ENCODE measurements at regions of chr21 and their contacts with region 1.

Region 1: GRCh38 chr21:46285761-46286496 is at the start of gene YBEY:
- DNase-seq: peak; percentile 93
- H3K4me3 Mint-ChIP-seq: peak within 1 kb of the TSS; percentile 98
- H3K27ac Mint-ChIP-seq: peak within 1 kb of the TSS; percentile 96
- H3K4me1 Mint-ChIP-seq: peaks cover 55% of the 10 kb centered on the region
- H3K27me3 Mint-ChIP-seq: no peaks in the 10 kb centered on the region
- total RNA-seq, gene YBEY: 14.4 to 14.8 TPM

Region 2: DNA sequence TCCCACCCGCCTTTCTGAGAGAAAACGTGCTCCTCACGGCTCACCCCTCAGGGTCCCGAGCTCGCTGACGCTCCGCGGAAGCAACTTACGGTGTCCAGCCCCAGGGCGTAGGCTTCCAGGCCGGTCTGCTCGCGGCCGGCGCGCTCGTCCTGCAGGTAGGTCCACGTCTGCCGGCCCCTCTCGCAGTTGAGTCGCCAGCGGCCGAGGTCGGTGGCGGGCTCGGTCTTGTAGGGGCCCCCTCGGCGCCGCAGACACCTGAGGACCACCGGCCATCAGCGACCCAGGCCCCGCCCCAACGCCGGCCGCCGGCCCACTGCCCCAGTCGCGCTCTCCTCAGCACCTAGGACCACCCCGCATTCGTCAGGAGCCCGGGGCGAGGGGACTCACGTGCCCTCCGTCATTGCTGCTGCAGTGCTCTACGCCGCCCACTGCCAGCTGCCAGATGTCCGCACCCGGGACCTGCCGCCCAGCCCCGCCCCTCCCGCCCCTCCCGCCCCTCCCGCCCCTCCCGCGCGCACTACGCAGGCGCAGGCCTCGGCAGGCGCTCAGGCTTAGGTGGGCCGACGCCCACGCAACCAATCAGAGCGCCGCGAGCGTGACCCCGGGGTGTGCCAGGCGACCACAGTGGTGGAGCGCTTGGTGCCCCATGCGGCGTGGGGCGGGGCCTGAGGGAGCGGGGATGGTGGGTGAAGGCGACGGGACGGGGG is 57.4 kb before region 1 on chr21 and contains the start of gene LSS:
- CTCF ChIA-PET with region 1: no interaction called
- POLR2A ChIA-PET with region 1: interaction called, 3 read pairs
- intact Hi-C with region 1: loop called (anchors 1 kb)
- DNase-seq: peak; percentile 97
- H3K4me3 Mint-ChIP-seq: peak within 1 kb of the TSS; percentile 85
- H3K27ac Mint-ChIP-seq: peak within 1 kb of the TSS; percentile 70
- H3K4me1 Mint-ChIP-seq: peaks cover 35% of the 10 kb centered on the region
- H3K27me3 Mint-ChIP-seq: no peaks in the 10 kb centered on the region
- total RNA-seq, gene LSS: 22.7 to 22.8 TPM

Region 3: DNA sequence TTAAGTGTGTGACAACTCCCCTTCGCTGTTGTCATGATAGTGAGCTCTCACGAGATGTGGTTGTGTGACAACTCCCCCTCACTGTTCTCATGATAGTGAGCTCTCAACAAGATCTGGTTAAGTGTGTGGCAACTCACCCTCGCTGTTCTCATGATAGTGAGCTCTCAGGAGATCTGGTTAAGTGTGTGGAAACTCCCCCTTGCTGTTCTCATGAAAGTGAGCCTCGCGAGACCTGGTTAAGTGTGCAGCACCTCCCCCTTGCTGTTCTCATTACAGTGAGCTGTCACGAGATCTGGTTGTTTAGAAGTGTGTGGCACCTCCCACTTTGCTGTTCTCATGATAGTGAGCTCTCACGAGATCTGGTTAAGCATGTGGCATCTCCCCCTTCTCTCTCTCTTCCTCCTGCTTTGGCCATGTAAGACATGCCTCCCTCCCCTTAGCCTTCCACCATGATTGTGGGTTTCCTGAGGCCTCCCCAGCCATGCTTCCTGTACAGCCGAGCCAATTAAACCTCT is 32.3 kb before region 1 on chr21:
- CTCF ChIA-PET with region 1: no interaction called
- POLR2A ChIA-PET with region 1: no interaction called
- intact Hi-C with region 1: loop called (anchors 5 kb)
- DNase-seq: peak; percentile 75
- H3K4me3 Mint-ChIP-seq: no peak overlapping the region
- H3K27ac Mint-ChIP-seq: peak overlapping the region; percentile 79
- H3K4me1 Mint-ChIP-seq: peaks cover 31% of the 10 kb centered on the region
- H3K27me3 Mint-ChIP-seq: no peaks in the 10 kb centered on the region

Region 4: DNA sequence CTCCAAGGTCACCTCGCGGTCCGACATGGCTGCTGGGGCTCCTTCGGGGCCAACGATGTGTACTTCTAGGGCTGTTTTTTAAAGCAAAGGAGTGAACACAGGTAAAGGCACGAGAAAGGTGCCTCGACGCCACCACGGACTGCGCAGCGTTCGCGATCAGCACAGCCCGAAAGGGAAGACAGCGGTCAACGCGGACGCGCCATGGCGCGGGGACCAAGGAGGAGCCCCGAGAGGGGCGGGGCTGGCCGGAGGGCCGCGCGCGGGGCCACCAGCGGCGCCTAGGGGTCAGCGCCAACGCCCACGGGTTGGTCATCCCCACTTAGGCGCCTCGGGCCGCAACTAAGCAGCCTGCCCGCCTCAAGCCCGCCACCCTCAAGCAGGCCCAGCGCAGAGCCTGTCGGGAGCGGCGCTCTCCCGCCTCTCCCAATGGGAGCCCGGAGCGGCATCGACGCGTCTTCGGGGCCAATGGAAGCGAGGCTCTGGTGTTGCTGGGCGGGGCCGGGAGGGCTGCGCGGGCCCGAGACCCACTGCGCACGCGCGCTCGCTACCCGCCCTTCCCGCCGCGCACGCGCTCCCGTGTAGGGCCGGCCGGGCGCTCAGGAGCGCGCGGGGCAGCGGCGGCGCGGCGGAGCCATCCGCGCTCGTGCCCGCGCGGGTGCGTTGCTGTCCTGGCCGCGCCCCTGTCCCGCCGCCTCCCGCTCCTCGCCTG is 172.5 kb after region 1 on chr21 and contains the start of gene DIP2A:
- CTCF ChIA-PET with region 1: no interaction called
- POLR2A ChIA-PET with region 1: no interaction called
- intact Hi-C with region 1: loop called (anchors 10 kb)
- DNase-seq: peak; percentile 96
- H3K4me3 Mint-ChIP-seq: peak within 1 kb of the TSS; percentile 90
- H3K27ac Mint-ChIP-seq: peak within 1 kb of the TSS; percentile 81
- H3K4me1 Mint-ChIP-seq: peaks cover 42% of the 10 kb centered on the region
- H3K27me3 Mint-ChIP-seq: no peaks in the 10 kb centered on the region
- total RNA-seq, gene DIP2A: 32.0 to 35.3 TPM

Measured in activated CD4-positive, alpha-beta memory T cell treated with anti-CD3 and anti-CD28 coated beads for 36 hours (primary cell).